ENCODE measurements at regions of chr1 and their contacts with region 1.

Region 1: GRCh38 chr1:11719313-11720032 is 16.5 kb upstream of the AGTRAP start:
- DNase-seq: peak; percentile 82 to 86 (median 84)
- H3K4me3 ChIP-seq: peak overlapping the region; percentile 33 to 51
- H3K4me3 Mint-ChIP-seq: peak overlapping the region; percentile 65 to 87 (median 81)
- H3K27ac ChIP-seq: peak overlapping the region; percentile 50
- H3K27ac Mint-ChIP-seq: peak overlapping the region; percentile 58 to 96 (median 91)
- H3K4me1 ChIP-seq: peaks cover 17% of the 10 kb centered on the region
- H3K4me1 Mint-ChIP-seq: peaks cover 7 to 17% (median 11%) of the 10 kb centered on the region in 4 donors
- H3K27me3 ChIP-seq: no peaks in the 10 kb centered on the region
- H3K27me3 Mint-ChIP-seq: no peaks in the 10 kb centered on the region

Region 2: GRCh38 chr1:11337580-11338073 is 381.8 kb before region 1 on chr1:
- CTCF ChIA-PET with region 1: no interaction called
- POLR2A ChIA-PET with region 1: interaction called, 3 read pairs
- intact Hi-C with region 1: loop called (anchors 1 kb)
- DNase-seq: peak; percentile 44 to 63 (median 57)
- H3K4me3 ChIP-seq: no peak overlapping the region
- H3K4me3 Mint-ChIP-seq: no peak overlapping the region
- H3K27ac ChIP-seq: no peak overlapping the region
- H3K27ac Mint-ChIP-seq: no peak overlapping the region
- H3K4me1 ChIP-seq: no peaks in the 10 kb centered on the region
- H3K4me1 Mint-ChIP-seq: peaks cover 0 to 7% (median 4%) of the 10 kb centered on the region in 4 donors
- H3K27me3 ChIP-seq: no peaks in the 10 kb centered on the region
- H3K27me3 Mint-ChIP-seq: peaks cover 14 to 15% of the 10 kb centered on the region in 2 donors

Region 3: GRCh38 chr1:11522400-11523235 is 196.9 kb before region 1 on chr1:
- CTCF ChIA-PET with region 1: no interaction called
- POLR2A ChIA-PET with region 1: no interaction called
- intact Hi-C with region 1: no loop called
- DNase-seq: no peak
- H3K4me3 ChIP-seq: no peak overlapping the region
- H3K4me3 Mint-ChIP-seq: no peak overlapping the region
- H3K27ac ChIP-seq: no peak overlapping the region
- H3K27ac Mint-ChIP-seq: no peak overlapping the region
- H3K4me1 ChIP-seq: no peaks in the 10 kb centered on the region
- H3K4me1 Mint-ChIP-seq: no peaks in the 10 kb centered on the region
- H3K27me3 ChIP-seq: no peaks in the 10 kb centered on the region
- H3K27me3 Mint-ChIP-seq: no peaks in the 10 kb centered on the region

Region 4: DNA sequence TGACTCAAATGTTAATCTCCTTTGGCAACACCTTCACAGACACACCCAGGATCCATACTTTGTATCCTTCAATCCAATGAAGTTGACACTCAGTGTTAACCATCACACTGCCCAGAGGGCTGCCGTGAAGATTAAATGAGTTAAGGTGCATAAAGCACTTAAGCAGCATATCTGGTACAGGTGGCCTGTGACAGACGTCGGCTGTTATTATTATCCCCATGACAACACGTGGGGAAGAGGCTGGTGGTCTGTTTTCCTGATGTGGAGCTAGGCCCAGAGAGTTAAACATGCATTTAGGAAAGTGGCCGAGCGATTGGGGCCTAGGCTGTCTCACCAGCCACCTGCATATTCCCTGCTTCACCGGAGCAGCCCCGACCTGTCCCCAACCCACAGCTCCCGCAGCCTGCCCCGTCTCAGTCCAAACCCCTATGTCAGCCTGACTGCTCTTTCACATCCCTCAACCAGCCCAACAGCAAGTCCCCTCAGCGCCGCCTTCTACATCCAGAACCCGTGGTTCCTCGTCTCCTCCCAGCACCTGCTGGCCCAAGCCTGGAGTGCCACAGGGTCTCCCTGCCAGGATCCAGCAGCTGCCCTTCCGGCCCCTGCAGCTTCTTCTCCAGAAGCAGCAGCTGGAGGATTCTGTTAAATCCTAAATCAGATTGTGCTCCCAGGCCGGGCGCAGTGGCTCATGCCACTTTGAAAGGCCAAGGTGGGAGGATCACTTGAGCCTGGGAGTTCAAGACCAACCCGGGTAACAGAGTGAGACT is 143.2 kb before region 1 on chr1:
- CTCF ChIA-PET with region 1: no interaction called
- POLR2A ChIA-PET with region 1: no interaction called
- intact Hi-C with region 1: no loop called
- DNase-seq: no peak
- H3K4me3 ChIP-seq: no peak overlapping the region
- H3K4me3 Mint-ChIP-seq: no peak overlapping the region
- H3K27ac ChIP-seq: no peak overlapping the region
- H3K27ac Mint-ChIP-seq: peak overlapping the region in 1 of 7 donors; percentile 24
- H3K4me1 ChIP-seq: no peaks in the 10 kb centered on the region
- H3K4me1 Mint-ChIP-seq: peaks cover 0 to 3% (median 0%) of the 10 kb centered on the region in 4 donors
- H3K27me3 ChIP-seq: no peaks in the 10 kb centered on the region
- H3K27me3 Mint-ChIP-seq: peaks cover 14 to 16% of the 10 kb centered on the region in 2 donors

Region 5: GRCh38 chr1:11654137-11654938 is 65.1 kb before region 1 on chr1 and contains the starts of genes FBXO2 and FBXO44:
- CTCF ChIA-PET with region 1: interaction called, 165 read pairs
- POLR2A ChIA-PET with region 1: interaction called, 67 read pairs
- intact Hi-C with region 1: loop called (anchors 1 kb)
- DNase-seq: peak; percentile 50 to 77 (median 67)
- H3K4me3 ChIP-seq: peak within 1 kb of the TSS; percentile 55 to 58
- H3K4me3 Mint-ChIP-seq: peak within 1 kb of the TSS; percentile 66 to 84 (median 77)
- H3K27ac ChIP-seq: peak within 1 kb of the TSS; percentile 38
- H3K27ac Mint-ChIP-seq: peak within 1 kb of the TSS in 5 of 7 donors; percentile 6 to 75 (median 60)
- H3K4me1 ChIP-seq: peaks cover 32% of the 10 kb centered on the region
- H3K4me1 Mint-ChIP-seq: peaks cover 11 to 44% (median 31%) of the 10 kb centered on the region in 4 donors
- H3K27me3 ChIP-seq: no peaks in the 10 kb centered on the region
- H3K27me3 Mint-ChIP-seq: no peaks in the 10 kb centered on the region
- total RNA-seq, gene FBXO2: 4.4 to 5.1 TPM
- total RNA-seq, gene FBXO44: 56.7 to 56.9 TPM

Region 6: GRCh38 chr1:11681071-11681771 is 38.3 kb before region 1 on chr1 and contains the start of gene MAD2L2:
- CTCF ChIA-PET with region 1: interaction called, 20 read pairs
- POLR2A ChIA-PET with region 1: interaction called, 14 read pairs
- intact Hi-C with region 1: loop called (anchors 5 kb)
- DNase-seq: peak; percentile 87 to 89 (median 88)
- H3K4me3 ChIP-seq: peak within 1 kb of the TSS; percentile 52 to 87
- H3K4me3 Mint-ChIP-seq: peak within 1 kb of the TSS; percentile 93 to 99 (median 96)
- H3K27ac ChIP-seq: peak within 1 kb of the TSS; percentile 76
- H3K27ac Mint-ChIP-seq: peak within 1 kb of the TSS; percentile 89 to 96 (median 91)
- H3K4me1 ChIP-seq: peaks cover 21% of the 10 kb centered on the region
- H3K4me1 Mint-ChIP-seq: peaks cover 10 to 25% (median 18%) of the 10 kb centered on the region in 4 donors
- H3K27me3 ChIP-seq: no peaks in the 10 kb centered on the region
- H3K27me3 Mint-ChIP-seq: peaks cover 2 to 5% of the 10 kb centered on the region in 2 donors
- total RNA-seq, gene MAD2L2: 20.7 to 22.7 TPM

Region 7: GRCh38 chr1:11730429-11730891 is 11.0 kb after region 1 on chr1:
- CTCF ChIA-PET with region 1: interaction called, 20 read pairs
- POLR2A ChIA-PET with region 1: interaction called, 31 read pairs
- intact Hi-C with region 1: loop called (anchors 1 kb)
- DNase-seq: peak; percentile 49 to 74 (median 63)
- H3K4me3 ChIP-seq: peak overlapping the region in 1 of 2 donors; percentile 48
- H3K4me3 Mint-ChIP-seq: peak overlapping the region; percentile 74 to 97 (median 84)
- H3K27ac ChIP-seq: peak overlapping the region; percentile 25
- H3K27ac Mint-ChIP-seq: peak overlapping the region; percentile 58 to 91 (median 85)
- H3K4me1 ChIP-seq: peaks cover 48% of the 10 kb centered on the region
- H3K4me1 Mint-ChIP-seq: peaks cover 26 to 56% (median 36%) of the 10 kb centered on the region in 4 donors
- H3K27me3 ChIP-seq: no peaks in the 10 kb centered on the region
- H3K27me3 Mint-ChIP-seq: no peaks in the 10 kb centered on the region

Region 8: GRCh38 chr1:11749203-11749689 is 29.8 kb after region 1 on chr1:
- CTCF ChIA-PET with region 1: interaction called, 6 read pairs
- POLR2A ChIA-PET with region 1: no interaction called
- intact Hi-C with region 1: loop called (anchors 1 kb)
- DNase-seq: peak; percentile 38 to 64 (median 51)
- H3K4me3 ChIP-seq: no peak overlapping the region
- H3K4me3 Mint-ChIP-seq: no peak overlapping the region
- H3K27ac ChIP-seq: no peak overlapping the region
- H3K27ac Mint-ChIP-seq: peak overlapping the region in 6 of 7 donors; percentile 53 to 92 (median 86)
- H3K4me1 ChIP-seq: peaks cover 9% of the 10 kb centered on the region
- H3K4me1 Mint-ChIP-seq: peaks cover 9 to 31% (median 19%) of the 10 kb centered on the region in 4 donors
- H3K27me3 ChIP-seq: no peaks in the 10 kb centered on the region
- H3K27me3 Mint-ChIP-seq: no peaks in the 10 kb centered on the region